Psoas muscle (tissue), 8 donors: ENCODE measurements at regions of chr6 and their contacts with region 1.

Region 1: DNA sequence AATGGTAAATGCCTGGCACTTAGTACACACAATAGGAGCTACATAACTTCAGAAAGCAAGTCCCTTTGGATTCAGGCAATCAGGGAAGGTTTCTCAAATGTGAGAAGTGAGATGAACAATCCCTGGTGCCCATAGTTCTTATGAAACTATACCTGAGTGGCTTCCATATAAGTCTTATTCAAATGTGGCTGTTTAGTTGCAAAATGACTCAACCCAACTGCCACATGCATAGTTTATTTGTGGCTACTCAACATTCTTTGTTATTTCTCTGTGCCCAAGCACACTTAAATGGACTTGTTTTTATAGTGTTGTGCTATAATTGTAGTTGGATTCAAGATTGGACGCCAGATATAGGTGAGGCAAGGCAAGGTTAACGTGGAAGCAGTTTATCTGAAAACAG is 93.7 kb upstream of the ATXN1 start:
- DNase-seq: no peak
- ATAC-seq: no peak
- H3K4me3 ChIP-seq: no peak overlapping the region
- H3K27ac ChIP-seq: no peak overlapping the region
- H3K4me1 ChIP-seq: peaks cover 2% of the 10 kb centered on the region
- H3K27me3 ChIP-seq: no peaks in the 10 kb centered on the region
- CTCF ChIP-seq: no peak

Region 2: GRCh38 chr6:16909658-16910360 is 54.8 kb after region 1 on chr6:
- intact Hi-C with region 1: loop called in 1 of 2 experiments (anchors 5 kb)
- DNase-seq: no peak
- ATAC-seq: no peak
- H3K4me3 ChIP-seq: no peak overlapping the region
- H3K27ac ChIP-seq: no peak overlapping the region
- H3K4me1 ChIP-seq: no peaks in the 10 kb centered on the region
- H3K27me3 ChIP-seq: peaks cover 0 to 3% (median 0%) of the 10 kb centered on the region in 3 donors
- CTCF ChIP-seq: no peak

Region 3: GRCh38 chr6:17392978-17393891 is 538.2 kb after region 1 on chr6 and contains the start of gene CAP2:
- intact Hi-C with region 1: no loop called
- DNase-seq: peak; percentile 74 to 91
- ATAC-seq: peak; percentile 88 to 93 (median 90)
- H3K4me3 ChIP-seq: peak within 1 kb of the TSS; percentile 78
- H3K27ac ChIP-seq: peak within 1 kb of the TSS; percentile 97
- H3K4me1 ChIP-seq: peaks cover 22% of the 10 kb centered on the region
- H3K27me3 ChIP-seq: no peaks in the 10 kb centered on the region
- CTCF ChIP-seq: no peak
- total RNA-seq, gene CAP2: 344 to 452 (median 385) TPM